Activated CD4-positive, alpha-beta memory T cell treated with anti-CD3 and anti-CD28 coated beads for 36 hours (primary cell): ENCODE measurements at regions of chr2 and their contacts with region 1.

Region 1: DNA sequence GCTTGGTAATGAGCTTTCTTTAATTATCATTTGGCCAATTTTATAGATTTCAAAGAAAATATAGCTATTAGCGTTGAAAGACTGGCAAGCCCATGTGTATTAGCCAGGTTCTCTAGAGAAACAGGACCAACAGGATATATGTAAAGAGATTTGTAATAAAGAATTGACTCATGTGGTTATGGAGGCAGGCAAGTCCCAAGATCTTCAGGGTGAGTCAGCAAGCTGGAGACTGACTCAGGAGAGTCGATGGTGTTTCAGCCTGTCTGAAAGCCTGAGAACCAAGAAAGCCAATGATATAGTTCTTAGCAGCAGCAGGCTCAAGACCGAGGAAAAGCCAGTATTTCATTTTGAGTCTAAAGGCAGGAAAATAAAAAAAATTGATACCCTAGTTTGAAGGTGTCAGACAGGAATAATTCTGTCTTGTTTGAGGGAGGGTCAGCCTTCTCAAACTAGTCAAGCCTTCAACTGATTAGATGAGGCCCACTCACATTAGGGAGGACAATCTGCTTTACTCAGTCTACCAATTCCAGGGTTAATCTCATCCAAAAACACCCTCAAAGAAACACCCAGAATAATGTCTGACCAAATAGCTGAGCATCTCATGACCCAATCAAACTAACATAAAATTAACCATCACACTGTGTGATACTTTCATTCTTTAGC is 78.3 kb upstream of the CRIM1 start:
- DNase-seq: peak; percentile 57
- H3K4me3 Mint-ChIP-seq: no peak overlapping the region
- H3K27ac Mint-ChIP-seq: no peak overlapping the region
- H3K4me1 Mint-ChIP-seq: peaks cover 3% of the 10 kb centered on the region
- H3K27me3 Mint-ChIP-seq: no peaks in the 10 kb centered on the region

Region 2: GRCh38 chr2:36307441-36307840 is 30.2 kb after region 1 on chr2:
- CTCF ChIA-PET with region 1: no interaction called
- POLR2A ChIA-PET with region 1: no interaction called
- intact Hi-C with region 1: loop called (anchors 1 kb)
- DNase-seq: no peak
- H3K4me3 Mint-ChIP-seq: no peak overlapping the region
- H3K27ac Mint-ChIP-seq: no peak overlapping the region
- H3K4me1 Mint-ChIP-seq: peaks cover 25% of the 10 kb centered on the region
- H3K27me3 Mint-ChIP-seq: peaks cover 2% of the 10 kb centered on the region

Region 3: GRCh38 chr2:36416370-36417165 is 139.3 kb after region 1 on chr2:
- CTCF ChIA-PET with region 1: no interaction called
- POLR2A ChIA-PET with region 1: no interaction called
- intact Hi-C with region 1: no loop called
- DNase-seq: no peak
- H3K4me3 Mint-ChIP-seq: no peak overlapping the region
- H3K27ac Mint-ChIP-seq: no peak overlapping the region
- H3K4me1 Mint-ChIP-seq: peaks cover 4% of the 10 kb centered on the region
- H3K27me3 Mint-ChIP-seq: no peaks in the 10 kb centered on the region